Common myeloid progenitor, CD34-positive (primary cell): ENCODE measurements at regions of chr16 and their contacts with region 1.

Region 1: GRCh38 chr16:66344533-66345145 is 21.9 kb upstream of the CDH5 start:
- DNase-seq: peak; percentile 40 to 71 (median 65)
- H3K4me3 ChIP-seq: no peak overlapping the region
- H3K27ac ChIP-seq: no peak overlapping the region
- H3K4me1 ChIP-seq: no peaks in the 10 kb centered on the region
- H3K27me3 ChIP-seq: peaks cover 0 to 6% (median 0%) of the 10 kb centered on the region in 5 experiments

Region 2: GRCh38 chr16:66315210-66315825 is 29.3 kb before region 1 on chr16:
- CTCF ChIA-PET with region 1: interaction called, 10 read pairs
- POLR2A ChIA-PET with region 1: no interaction called
- DNase-seq: peak; percentile 53 to 75 (median 67)
- H3K4me3 ChIP-seq: no peak overlapping the region
- H3K27ac ChIP-seq: no peak overlapping the region
- H3K4me1 ChIP-seq: no peaks in the 10 kb centered on the region
- H3K27me3 ChIP-seq: peaks cover 0 to 3% (median 0%) of the 10 kb centered on the region in 5 experiments

Region 3: GRCh38 chr16:66332634-66333610 is 11.7 kb before region 1 on chr16:
- CTCF ChIA-PET with region 1: interaction called, 21 read pairs
- POLR2A ChIA-PET with region 1: no interaction called
- DNase-seq: no peak
- H3K4me3 ChIP-seq: no peak overlapping the region
- H3K27ac ChIP-seq: no peak overlapping the region
- H3K4me1 ChIP-seq: no peaks in the 10 kb centered on the region
- H3K27me3 ChIP-seq: peaks cover 0 to 4% (median 2%) of the 10 kb centered on the region in 5 experiments

Region 4: GRCh38 chr16:66357153-66357928 is 12.7 kb after region 1 on chr16:
- CTCF ChIA-PET with region 1: interaction called, 88 read pairs
- POLR2A ChIA-PET with region 1: no interaction called
- DNase-seq: peak; percentile 48 to 57 (median 49)
- H3K4me3 ChIP-seq: no peak overlapping the region
- H3K27ac ChIP-seq: no peak overlapping the region
- H3K4me1 ChIP-seq: peaks cover 0 to 37% (median 24%) of the 10 kb centered on the region in 4 experiments
- H3K27me3 ChIP-seq: peaks cover 0 to 3% (median 0%) of the 10 kb centered on the region in 5 experiments

Region 5: GRCh38 chr16:66364117-66364967 is 19.7 kb after region 1 on chr16:
- CTCF ChIA-PET with region 1: interaction called, 14 read pairs
- POLR2A ChIA-PET with region 1: no interaction called
- DNase-seq: peak in 1 of 3 donors; percentile 38
- H3K4me3 ChIP-seq: peak overlapping the region in 2 of 7 experiments; percentile 28 to 42
- H3K27ac ChIP-seq: no peak overlapping the region
- H3K4me1 ChIP-seq: peaks cover 0 to 86% (median 77%) of the 10 kb centered on the region in 4 experiments
- H3K27me3 ChIP-seq: no peaks in the 10 kb centered on the region